ENCODE measurements at regions of chr19 and their contacts with region 1.

Region 1: DNA sequence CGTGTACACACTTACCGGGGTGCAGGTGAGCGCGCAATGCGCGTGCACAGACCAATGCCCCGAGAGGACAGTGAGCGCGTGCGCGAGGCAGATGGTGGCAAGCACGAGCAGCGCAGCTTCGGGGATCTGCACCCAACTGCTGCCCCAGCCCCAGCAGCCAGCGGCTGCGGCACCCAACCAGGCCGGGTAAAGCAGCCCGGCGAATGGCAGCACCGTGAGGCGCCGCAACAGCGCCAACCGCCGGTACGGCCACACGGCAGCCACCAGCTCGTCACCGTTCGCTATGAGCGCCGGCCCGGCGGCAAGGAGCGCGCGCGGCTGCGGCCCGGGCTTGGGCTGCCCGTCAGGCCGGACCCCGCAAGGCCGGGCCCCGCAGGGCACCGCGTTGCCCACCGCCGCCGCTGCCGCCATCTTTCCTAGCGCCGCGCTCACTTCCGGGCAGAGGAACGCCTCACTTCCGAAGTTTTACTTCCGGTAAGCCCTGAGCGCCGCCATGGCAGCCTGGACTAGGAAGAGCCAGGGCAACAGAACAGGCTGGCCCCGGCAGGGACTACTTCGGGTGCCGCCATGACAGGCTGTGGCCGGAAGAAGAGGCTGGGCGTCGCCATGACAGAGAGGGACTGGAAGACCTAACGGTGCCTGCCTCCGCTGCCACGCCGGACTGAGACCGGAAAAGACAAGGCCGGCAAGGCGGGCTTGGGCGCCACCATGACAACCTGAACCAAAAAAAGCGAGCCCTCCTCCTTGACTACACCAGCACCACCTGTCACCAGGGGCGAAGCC is at the start of gene ATP13A1:
- DNase-seq: peak; percentile 83 to 96 (median 93)
- ATAC-seq: peak; percentile 85
- H3K4me3 ChIP-seq: peak within 1 kb of the TSS; percentile 96
- H3K4me3 Mint-ChIP-seq: peak within 1 kb of the TSS; percentile 79 to 99 (median 96)
- H3K27ac ChIP-seq: peak within 1 kb of the TSS; percentile 98
- H3K27ac Mint-ChIP-seq: peak within 1 kb of the TSS; percentile 93 to 99 (median 99)
- H3K4me1 ChIP-seq: peaks cover 30 to 32% of the 10 kb centered on the region in 2 donors
- H3K4me1 Mint-ChIP-seq: peaks cover 20 to 44% (median 36%) of the 10 kb centered on the region in 7 donors
- H3K27me3 ChIP-seq: no peaks in the 10 kb centered on the region
- H3K27me3 Mint-ChIP-seq: peaks cover 0 to 3% (median 0%) of the 10 kb centered on the region in 5 donors
- total RNA-seq, gene ATP13A1: 86.5 to 138 (median 98.9) TPM

Region 2: GRCh38 chr19:19385108-19385899 is 278.1 kb before region 1 on chr19:
- CTCF ChIA-PET with region 1: no interaction called
- POLR2A ChIA-PET with region 1: no interaction called
- intact Hi-C with region 1: loop called in 1 of 2 experiments (anchors 5 kb)
- DNase-seq: peak; percentile 95 to 100 (median 99)
- ATAC-seq: peak; percentile 93
- H3K4me3 ChIP-seq: peak overlapping the region; percentile 81
- H3K4me3 Mint-ChIP-seq: peak overlapping the region; percentile 89 to 99 (median 94)
- H3K27ac ChIP-seq: peak overlapping the region; percentile 88
- H3K27ac Mint-ChIP-seq: peak overlapping the region; percentile 25 to 96 (median 93)
- H3K4me1 ChIP-seq: peaks cover 29 to 42% of the 10 kb centered on the region in 2 donors
- H3K4me1 Mint-ChIP-seq: peaks cover 36 to 46% (median 42%) of the 10 kb centered on the region in 7 donors
- H3K27me3 ChIP-seq: no peaks in the 10 kb centered on the region
- H3K27me3 Mint-ChIP-seq: no peaks in the 10 kb centered on the region

Region 3: DNA sequence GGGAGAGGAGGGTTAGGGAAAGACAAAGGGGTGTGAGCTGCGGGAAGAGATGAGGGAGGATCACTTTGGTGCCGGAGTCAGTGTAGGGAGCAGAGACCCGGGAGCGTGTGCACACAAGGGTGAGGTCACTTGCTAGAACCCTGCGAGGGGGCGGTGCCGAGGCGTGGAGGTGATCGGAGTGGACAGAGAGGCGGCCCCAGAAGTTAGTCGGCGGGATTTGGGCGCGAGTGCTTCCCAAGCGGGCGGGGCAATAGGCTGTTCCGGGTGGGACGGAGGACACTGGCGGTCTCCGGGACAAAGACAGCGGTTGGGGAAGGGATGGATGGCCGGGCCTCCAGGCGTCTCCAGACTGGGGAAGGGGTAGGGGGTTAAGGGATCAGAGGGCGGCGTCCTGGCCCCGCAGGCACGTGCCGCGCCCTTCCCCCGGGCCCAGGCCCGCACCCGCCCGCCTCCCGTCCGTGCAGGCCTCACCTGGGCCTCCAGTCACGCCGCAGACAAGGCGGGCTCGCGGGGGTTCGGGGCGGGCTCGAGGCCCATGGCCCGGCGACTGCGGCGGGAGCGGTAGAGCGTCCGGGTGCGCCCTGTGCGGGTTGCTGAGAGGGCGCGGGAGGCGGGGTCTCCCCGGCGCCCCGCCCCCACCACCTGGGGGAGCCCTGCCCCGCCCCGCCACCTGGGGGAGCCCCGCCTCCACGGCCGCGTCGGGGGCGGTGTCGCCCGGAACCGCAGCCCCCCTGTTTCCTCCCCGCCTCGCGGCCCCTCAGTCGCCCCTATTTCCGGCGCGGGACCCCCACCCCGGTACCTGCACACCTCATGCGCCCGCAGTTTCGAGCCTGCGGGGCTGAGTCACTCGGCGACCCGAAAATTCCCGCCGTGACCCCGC is 35.6 kb before region 1 on chr19 and contains the start of gene LPAR2:
- CTCF ChIA-PET with region 1: interaction called, 3 read pairs
- POLR2A ChIA-PET with region 1: interaction called, 20 read pairs
- intact Hi-C with region 1: loop called in 1 of 2 experiments (anchors 2 kb)
- DNase-seq: peak; percentile 73 to 90 (median 82)
- ATAC-seq: peak; percentile 95
- H3K4me3 ChIP-seq: peak within 1 kb of the TSS; percentile 79
- H3K4me3 Mint-ChIP-seq: peak within 1 kb of the TSS; percentile 91 to 100 (median 96)
- H3K27ac ChIP-seq: peak within 1 kb of the TSS; percentile 92
- H3K27ac Mint-ChIP-seq: peak within 1 kb of the TSS; percentile 86 to 98 (median 95)
- H3K4me1 ChIP-seq: peaks cover 6 to 18% of the 10 kb centered on the region in 2 donors
- H3K4me1 Mint-ChIP-seq: peaks cover 17 to 32% (median 27%) of the 10 kb centered on the region in 7 donors
- H3K27me3 ChIP-seq: no peaks in the 10 kb centered on the region
- H3K27me3 Mint-ChIP-seq: no peaks in the 10 kb centered on the region
- total RNA-seq, gene LPAR2: 64.4 to 91.7 (median 75.0) TPM

Region 4: DNA sequence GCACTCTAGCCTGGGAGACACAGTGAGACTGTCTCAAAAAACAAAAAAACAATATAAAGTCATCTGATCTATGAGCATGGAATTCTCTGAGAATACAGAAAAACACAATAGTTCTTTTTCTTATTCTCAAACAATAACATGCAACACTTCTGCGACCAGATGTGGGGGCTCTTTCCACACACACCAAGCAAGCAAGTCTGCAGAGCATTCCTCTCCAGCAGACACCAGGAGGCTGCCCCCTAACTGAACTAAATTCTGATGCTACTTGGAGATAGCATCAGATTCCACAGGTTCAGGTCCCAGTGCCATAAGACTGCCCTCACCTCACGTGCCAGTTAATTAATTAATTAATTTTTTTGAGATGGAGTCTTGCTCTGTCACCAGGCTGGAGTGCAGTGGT is 32.9 kb after region 1 on chr19:
- CTCF ChIA-PET with region 1: no interaction called
- POLR2A ChIA-PET with region 1: interaction called, 13 read pairs
- intact Hi-C with region 1: no loop called
- DNase-seq: no peak
- ATAC-seq: no peak
- H3K4me3 ChIP-seq: no peak overlapping the region
- H3K4me3 Mint-ChIP-seq: no peak overlapping the region
- H3K27ac ChIP-seq: no peak overlapping the region
- H3K27ac Mint-ChIP-seq: no peak overlapping the region
- H3K4me1 ChIP-seq: no peaks in the 10 kb centered on the region
- H3K4me1 Mint-ChIP-seq: no peaks in the 10 kb centered on the region
- H3K27me3 ChIP-seq: no peaks in the 10 kb centered on the region
- H3K27me3 Mint-ChIP-seq: no peaks in the 10 kb centered on the region

Region 5: GRCh38 chr19:19821366-19821951 is 158.0 kb after region 1 on chr19 and contains the start of gene ZNF506:
- CTCF ChIA-PET with region 1: no interaction called
- POLR2A ChIA-PET with region 1: interaction called, 96 read pairs
- intact Hi-C with region 1: loop called (anchors 1 kb)
- DNase-seq: peak; percentile 83 to 98 (median 97)
- ATAC-seq: peak; percentile 91
- H3K4me3 ChIP-seq: peak within 1 kb of the TSS; percentile 69
- H3K4me3 Mint-ChIP-seq: peak within 1 kb of the TSS; percentile 97 to 100 (median 99)
- H3K27ac ChIP-seq: peak within 1 kb of the TSS; percentile 98
- H3K27ac Mint-ChIP-seq: peak within 1 kb of the TSS; percentile 99 to 100 (median 100)
- H3K4me1 ChIP-seq: peaks cover 19 to 26% of the 10 kb centered on the region in 2 donors
- H3K4me1 Mint-ChIP-seq: peaks cover 9 to 52% (median 32%) of the 10 kb centered on the region in 7 donors
- H3K27me3 ChIP-seq: no peaks in the 10 kb centered on the region
- H3K27me3 Mint-ChIP-seq: no peaks in the 10 kb centered on the region
- total RNA-seq, gene ZNF506: 20.4 to 93.9 (median 55.7) TPM

Region 6: DNA sequence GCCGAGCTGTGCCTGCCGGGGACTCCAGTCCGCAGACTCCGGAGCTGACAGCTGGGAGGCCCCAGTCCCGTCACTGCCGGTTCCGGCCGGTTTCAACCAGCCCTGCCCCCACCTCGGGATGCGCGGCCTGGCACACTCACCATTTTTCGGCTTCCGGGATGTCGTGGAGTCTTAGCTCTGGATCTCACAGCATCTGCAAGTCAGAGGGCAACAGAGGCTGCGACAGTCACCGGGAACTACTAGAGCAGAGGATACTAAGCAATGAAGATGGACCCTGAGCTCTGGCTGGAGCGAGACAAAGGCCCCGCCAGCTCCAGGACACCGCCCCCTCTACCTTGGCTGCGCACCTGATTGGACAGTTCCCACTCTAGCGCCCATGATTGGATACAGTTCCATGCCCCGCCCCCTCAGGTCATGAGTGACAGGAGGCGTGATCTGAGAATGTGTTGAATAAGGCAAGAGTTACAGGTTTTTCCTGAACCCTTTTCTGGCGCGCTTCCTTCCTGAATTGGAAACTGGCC is 375.8 kb after region 1 on chr19 and contains the start of gene ZNF682:
- CTCF ChIA-PET with region 1: no interaction called
- POLR2A ChIA-PET with region 1: no interaction called
- intact Hi-C with region 1: loop called in 1 of 2 experiments (anchors 10 kb)
- DNase-seq: peak; percentile 83 to 96 (median 94)
- ATAC-seq: peak; percentile 100
- H3K4me3 ChIP-seq: peak within 1 kb of the TSS; percentile 90
- H3K4me3 Mint-ChIP-seq: peak within 1 kb of the TSS; percentile 92 to 99 (median 96)
- H3K27ac ChIP-seq: peak within 1 kb of the TSS; percentile 81
- H3K27ac Mint-ChIP-seq: peak within 1 kb of the TSS; percentile 86 to 98 (median 94)
- H3K4me1 ChIP-seq: no peaks in the 10 kb centered on the region
- H3K4me1 Mint-ChIP-seq: peaks cover 5 to 27% (median 25%) of the 10 kb centered on the region in 7 donors
- H3K27me3 ChIP-seq: no peaks in the 10 kb centered on the region
- H3K27me3 Mint-ChIP-seq: peaks cover 0 to 5% (median 0%) of the 10 kb centered on the region in 5 donors
- total RNA-seq, gene ZNF682: 5.3 to 13.0 (median 9.5) TPM

Measured in naive thymus-derived CD4-positive, alpha-beta T cell (primary cell).